Vagina (tissue), 2 donors: ENCODE measurements at regions of chr7 and their contacts with region 1.

Region 1: GRCh38 chr7:100015232-100016209 is at the start of gene ZKSCAN1:
- DNase-seq: peak in 1 of 2 donors; percentile 91
- H3K4me3 ChIP-seq: peak within 1 kb of the TSS; percentile 95 to 98
- H3K27ac ChIP-seq: peak within 1 kb of the TSS; percentile 98
- H3K4me1 ChIP-seq: peaks cover 33% of the 10 kb centered on the region
- H3K27me3 ChIP-seq: no peaks in the 10 kb centered on the region
- CTCF ChIP-seq: no peak
- POLR2A ChIP-seq: peak in 1 of 2 donors; percentile 77
- total RNA-seq, gene ZKSCAN1: 36.6 TPM

Region 2: DNA sequence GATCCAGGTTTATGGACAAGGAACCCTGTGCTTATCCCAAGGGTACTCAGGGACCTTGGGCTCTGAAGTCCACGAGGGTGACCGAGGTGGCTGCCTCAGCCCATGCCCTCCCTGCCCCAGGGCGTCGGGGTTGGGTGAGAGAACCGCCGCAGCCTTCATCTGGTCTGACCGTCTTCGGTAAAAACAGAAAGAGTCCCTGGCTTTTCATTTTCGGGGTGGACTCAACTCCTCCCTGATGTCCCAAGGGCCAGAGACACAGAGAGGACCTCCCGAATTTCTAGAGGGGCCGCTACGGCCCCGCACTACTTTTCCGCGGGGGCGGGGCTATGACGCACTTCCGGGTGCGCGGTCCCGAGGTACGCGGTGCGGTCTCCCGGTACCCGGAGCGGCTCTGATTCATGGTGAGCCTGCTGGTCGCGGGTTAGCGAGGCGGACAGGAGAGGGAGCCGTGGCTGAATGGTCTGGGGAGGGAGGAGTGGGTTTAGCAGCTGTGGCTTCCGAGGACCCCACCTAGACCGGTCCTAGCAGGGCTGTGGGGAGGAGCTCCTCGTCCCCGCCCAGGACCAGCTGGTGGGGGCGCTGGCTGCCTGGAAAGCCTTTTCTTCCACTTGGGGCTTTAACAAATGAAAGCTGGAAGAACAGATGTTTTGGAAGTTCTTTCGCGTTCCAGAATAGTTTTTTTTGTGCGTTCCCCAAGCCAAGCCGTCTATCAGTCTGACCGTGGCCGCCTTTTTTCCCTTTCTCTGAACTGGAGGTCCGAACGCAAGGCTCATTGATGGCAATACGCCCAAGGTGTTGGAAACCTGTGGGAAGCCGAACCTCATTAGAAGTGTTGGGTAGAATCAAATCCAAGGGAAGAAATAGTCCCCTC is 34.2 kb after region 1 on chr7 and contains the start of gene ZSCAN21:
- intact Hi-C with region 1: loop called (anchors 1 kb)
- DNase-seq: peak in 1 of 2 donors; percentile 93
- H3K4me3 ChIP-seq: peak within 1 kb of the TSS; percentile 57 to 79
- H3K27ac ChIP-seq: peak within 1 kb of the TSS; percentile 92
- H3K4me1 ChIP-seq: peaks cover 40% of the 10 kb centered on the region
- H3K27me3 ChIP-seq: no peaks in the 10 kb centered on the region
- CTCF ChIP-seq: peak in 1 of 3 experiments; percentile 17
- POLR2A ChIP-seq: peak in 1 of 2 donors; percentile 66
- total RNA-seq, gene ZSCAN21: 19.9 TPM